Naive thymus-derived CD4-positive, alpha-beta T cell (primary cell): ENCODE measurements at regions of chr11 and their contacts with region 1.

Region 1: DNA sequence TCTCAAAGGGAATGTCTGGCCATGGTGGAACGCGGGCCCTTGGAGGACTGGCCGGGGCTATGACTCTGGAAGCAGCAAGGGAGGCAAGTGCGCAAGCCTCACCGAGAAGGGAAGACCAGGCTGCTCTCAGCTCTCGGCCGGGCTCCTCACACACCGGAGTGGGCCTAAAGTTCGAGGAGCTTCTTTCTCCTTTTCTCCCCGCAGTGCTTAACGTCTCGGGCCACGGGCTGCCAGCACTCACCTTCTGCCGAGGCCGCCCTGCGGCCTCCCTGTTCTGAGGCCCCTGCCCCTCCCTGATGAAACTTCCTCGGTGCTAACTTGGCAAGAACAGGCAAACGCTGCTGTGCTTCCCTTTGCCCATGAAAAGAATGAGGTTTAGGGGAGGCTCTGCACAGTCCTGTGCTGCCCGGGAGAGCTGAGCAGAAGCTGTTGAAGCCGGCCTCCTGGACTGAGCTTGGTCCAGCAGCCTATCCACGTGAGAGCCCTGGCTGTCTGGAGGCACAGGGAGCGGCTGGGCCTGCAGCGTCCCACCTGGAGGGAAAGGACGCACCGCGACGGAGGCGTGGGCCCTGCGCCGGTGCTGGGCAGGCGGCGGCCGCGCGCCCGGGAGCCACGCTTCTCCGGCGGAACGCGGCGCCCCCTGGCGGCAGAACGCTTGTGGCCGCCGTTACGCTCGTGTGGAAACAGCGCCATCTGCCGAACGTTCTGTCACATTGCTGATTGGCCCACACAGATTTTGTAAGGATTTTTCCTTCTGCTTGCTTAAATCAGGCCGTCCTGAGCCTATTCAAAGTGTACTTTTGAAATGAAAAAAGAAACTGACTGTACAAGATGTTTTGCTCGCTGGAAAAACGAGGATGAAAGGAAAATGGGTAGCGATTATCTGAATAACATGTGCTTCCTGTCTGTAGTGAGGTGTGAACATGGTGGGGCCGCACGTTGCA is 65.0 kb upstream of the TMEM45B start:
- DNase-seq: peak; percentile 53 to 89 (median 81)
- ATAC-seq: peak; percentile 97
- H3K4me3 ChIP-seq: peak overlapping the region; percentile 51
- H3K4me3 Mint-ChIP-seq: peak overlapping the region in 9 of 10 donors; percentile 25 to 76 (median 61)
- H3K27ac ChIP-seq: no peak overlapping the region
- H3K27ac Mint-ChIP-seq: peak overlapping the region in 1 of 9 donors; percentile 48
- H3K4me1 ChIP-seq: peaks cover 2 to 5% of the 10 kb centered on the region in 2 donors
- H3K4me1 Mint-ChIP-seq: peaks cover 0 to 9% (median 3%) of the 10 kb centered on the region in 7 donors
- H3K27me3 ChIP-seq: no peaks in the 10 kb centered on the region
- H3K27me3 Mint-ChIP-seq: peaks cover 0 to 19% (median 0%) of the 10 kb centered on the region in 5 donors

Region 2: DNA sequence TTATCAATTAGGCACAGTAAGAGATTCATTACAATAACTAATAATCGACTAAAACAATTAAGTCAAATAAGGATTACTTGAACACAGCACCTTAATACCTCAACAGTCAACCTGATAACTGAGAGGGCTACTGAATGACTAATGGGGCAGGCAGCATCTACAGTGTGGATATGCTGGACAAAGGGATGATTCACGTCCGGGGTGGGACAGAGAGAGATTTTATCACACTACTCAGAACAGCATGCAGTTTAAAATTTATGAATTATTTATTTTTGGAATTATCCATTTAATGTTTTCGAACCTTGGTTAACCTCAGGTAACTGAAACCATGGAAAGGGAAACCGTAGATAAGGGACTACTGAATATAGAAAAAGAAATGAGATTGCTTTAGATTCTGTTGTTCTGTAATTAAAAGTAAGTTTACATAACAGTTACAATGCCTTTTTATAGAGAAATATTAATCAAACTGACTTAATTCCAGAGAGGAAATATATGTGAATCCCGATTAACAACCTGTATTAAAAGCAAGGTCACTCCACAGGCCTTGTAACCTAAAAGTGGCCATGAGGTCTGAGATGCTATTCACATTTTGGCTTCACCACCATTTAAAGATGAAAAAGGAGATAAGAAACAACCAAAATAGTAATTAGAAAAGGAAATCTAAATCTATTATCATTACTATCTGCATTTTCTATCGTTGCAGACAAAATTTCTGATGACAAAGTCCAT is 689.0 kb before region 1 on chr11:
- CTCF ChIA-PET with region 1: no interaction called
- POLR2A ChIA-PET with region 1: no interaction called
- intact Hi-C with region 1: no loop called
- DNase-seq: no peak
- ATAC-seq: no peak
- H3K4me3 ChIP-seq: no peak overlapping the region
- H3K4me3 Mint-ChIP-seq: no peak overlapping the region
- H3K27ac ChIP-seq: no peak overlapping the region
- H3K27ac Mint-ChIP-seq: no peak overlapping the region
- H3K4me1 ChIP-seq: no peaks in the 10 kb centered on the region
- H3K4me1 Mint-ChIP-seq: peaks cover 0 to 4% (median 0%) of the 10 kb centered on the region in 7 donors
- H3K27me3 ChIP-seq: no peaks in the 10 kb centered on the region
- H3K27me3 Mint-ChIP-seq: no peaks in the 10 kb centered on the region

Region 3: DNA sequence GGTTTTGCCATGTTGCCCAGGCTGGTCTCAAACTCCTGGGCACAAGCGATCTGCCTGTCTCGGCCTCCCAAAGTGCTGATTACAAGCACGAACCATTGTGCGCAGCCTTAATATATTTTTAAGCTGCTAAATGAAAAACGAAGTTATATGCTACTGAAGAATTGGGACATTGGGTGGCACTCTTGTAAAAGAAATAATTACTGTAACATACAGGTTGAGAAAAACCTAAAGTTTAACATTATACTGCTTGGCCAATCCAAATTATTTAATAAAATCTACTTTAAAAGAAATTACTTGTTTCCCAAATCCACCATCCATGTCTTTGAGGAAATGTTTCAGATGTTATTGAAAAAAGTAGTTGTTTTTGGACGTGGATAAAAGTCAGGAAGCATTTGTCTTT is 520.6 kb before region 1 on chr11:
- CTCF ChIA-PET with region 1: interaction called, 3 read pairs
- POLR2A ChIA-PET with region 1: no interaction called
- intact Hi-C with region 1: loop called in 1 of 2 experiments (anchors 1 kb)
- DNase-seq: peak in 3 of 9 donors; percentile 2 to 36 (median 15)
- ATAC-seq: no peak
- H3K4me3 ChIP-seq: no peak overlapping the region
- H3K4me3 Mint-ChIP-seq: no peak overlapping the region
- H3K27ac ChIP-seq: no peak overlapping the region
- H3K27ac Mint-ChIP-seq: no peak overlapping the region
- H3K4me1 ChIP-seq: no peaks in the 10 kb centered on the region
- H3K4me1 Mint-ChIP-seq: no peaks in the 10 kb centered on the region
- H3K27me3 ChIP-seq: no peaks in the 10 kb centered on the region
- H3K27me3 Mint-ChIP-seq: peaks cover 0 to 7% (median 0%) of the 10 kb centered on the region in 5 donors

Region 4: GRCh38 chr11:129620237-129621104 is 130.2 kb before region 1 on chr11:
- CTCF ChIA-PET with region 1: no interaction called
- POLR2A ChIA-PET with region 1: no interaction called
- intact Hi-C with region 1: no loop called
- DNase-seq: no peak
- ATAC-seq: no peak
- H3K4me3 ChIP-seq: no peak overlapping the region
- H3K4me3 Mint-ChIP-seq: no peak overlapping the region
- H3K27ac ChIP-seq: no peak overlapping the region
- H3K27ac Mint-ChIP-seq: peak overlapping the region in 1 of 9 donors; percentile 33
- H3K4me1 ChIP-seq: no peaks in the 10 kb centered on the region
- H3K4me1 Mint-ChIP-seq: peaks cover 0 to 3% (median 0%) of the 10 kb centered on the region in 7 donors
- H3K27me3 ChIP-seq: no peaks in the 10 kb centered on the region
- H3K27me3 Mint-ChIP-seq: peaks cover 0 to 6% (median 0%) of the 10 kb centered on the region in 5 donors

Region 5: GRCh38 chr11:129739339-129739738 is 11.3 kb before region 1 on chr11:
- CTCF ChIA-PET with region 1: interaction called, 10 read pairs
- POLR2A ChIA-PET with region 1: no interaction called
- intact Hi-C with region 1: no loop called
- DNase-seq: no peak
- ATAC-seq: no peak
- H3K4me3 ChIP-seq: no peak overlapping the region
- H3K4me3 Mint-ChIP-seq: no peak overlapping the region
- H3K27ac ChIP-seq: no peak overlapping the region
- H3K27ac Mint-ChIP-seq: no peak overlapping the region
- H3K4me1 ChIP-seq: no peaks in the 10 kb centered on the region
- H3K4me1 Mint-ChIP-seq: no peaks in the 10 kb centered on the region
- H3K27me3 ChIP-seq: no peaks in the 10 kb centered on the region
- H3K27me3 Mint-ChIP-seq: peaks cover 0 to 10% (median 0%) of the 10 kb centered on the region in 5 donors

Region 6: GRCh38 chr11:129840236-129840635 is 89.6 kb after region 1 on chr11:
- CTCF ChIA-PET with region 1: no interaction called
- POLR2A ChIA-PET with region 1: no interaction called
- intact Hi-C with region 1: no loop called
- DNase-seq: no peak
- ATAC-seq: no peak
- H3K4me3 ChIP-seq: no peak overlapping the region
- H3K4me3 Mint-ChIP-seq: peak overlapping the region in 7 of 10 donors; percentile 26 to 70 (median 44)
- H3K27ac ChIP-seq: no peak overlapping the region
- H3K27ac Mint-ChIP-seq: peak overlapping the region in 7 of 9 donors; percentile 3 to 88 (median 66)
- H3K4me1 ChIP-seq: peaks cover 0 to 12% of the 10 kb centered on the region in 2 donors
- H3K4me1 Mint-ChIP-seq: peaks cover 15 to 76% (median 46%) of the 10 kb centered on the region in 7 donors
- H3K27me3 ChIP-seq: no peaks in the 10 kb centered on the region
- H3K27me3 Mint-ChIP-seq: peaks cover 0 to 8% (median 0%) of the 10 kb centered on the region in 5 donors